K562 (cell line): ENCODE measurements at regions of chr5 and their contacts with region 1.

Region 1: DNA sequence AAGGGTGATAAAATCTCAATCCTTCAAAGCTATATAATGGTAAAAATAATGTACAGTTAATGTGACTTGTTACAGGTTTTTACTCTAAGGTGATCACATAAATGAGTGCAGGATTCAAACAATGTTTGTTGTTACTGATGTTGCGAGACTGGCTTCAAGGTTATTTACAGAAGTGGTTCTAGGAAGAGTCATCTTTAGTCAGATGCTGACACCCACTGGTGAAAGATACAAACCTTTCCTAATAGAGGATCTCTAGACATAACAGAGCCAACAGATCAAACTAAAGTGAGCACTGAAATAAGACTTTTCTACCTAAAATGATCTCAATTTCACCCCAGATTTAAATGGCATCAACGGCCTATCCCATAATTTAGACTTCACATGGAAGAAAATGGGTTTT is 20.2 kb downstream of the ARSB start:
- DNase-seq: peak in 1 of 4 experiments; percentile 47
- ATAC-seq: peak; percentile 74
- H3K4me3 ChIP-seq: no peak overlapping the region
- H3K27ac ChIP-seq: no peak overlapping the region
- H3K4me1 ChIP-seq: no peaks in the 10 kb centered on the region
- H3K27me3 ChIP-seq: no peaks in the 10 kb centered on the region
- CTCF ChIP-seq: peak; percentile 40 to 66 (median 50); a peak in 5 of 6 replicates
- EP300 ChIP-seq: no peak
- POLR2A ChIP-seq: no peak
- RAD21 ChIP-seq: peak; percentile 90 to 91

Region 2: GRCh38 chr5:78320401-78320800 is 644.5 kb before region 1 on chr5:
- CTCF ChIA-PET with region 1: interaction called, 7 read pairs
- POLR2A ChIA-PET with region 1: no interaction called
- in situ Hi-C with region 1: no loop called
- intact Hi-C with region 1: loop called (anchors 10 kb)
- DNase-seq: peak in 2 of 4 experiments; percentile 25 to 42
- ATAC-seq: peak; percentile 67; the same call in 2 of the 3 replicates
- H3K4me3 ChIP-seq: no peak overlapping the region
- H3K27ac ChIP-seq: no peak overlapping the region
- H3K4me1 ChIP-seq: no peaks in the 10 kb centered on the region
- H3K27me3 ChIP-seq: no peaks in the 10 kb centered on the region
- CTCF ChIP-seq: peak; percentile 42 to 79 (median 45); a peak in 4 of 6 replicates
- EP300 ChIP-seq: no peak
- POLR2A ChIP-seq: no peak
- RAD21 ChIP-seq: peak; percentile 70 to 88

Region 3: GRCh38 chr5:78638423-78638822 is 326.5 kb before region 1 on chr5:
- CTCF ChIA-PET with region 1: no interaction called
- POLR2A ChIA-PET with region 1: no interaction called
- in situ Hi-C with region 1: no loop called
- intact Hi-C with region 1: loop called (anchors 10 kb)
- DNase-seq: no peak
- ATAC-seq: no peak
- H3K4me3 ChIP-seq: no peak overlapping the region
- H3K27ac ChIP-seq: no peak overlapping the region
- H3K4me1 ChIP-seq: peaks cover 0 to 6% of the 10 kb centered on the region in 2 experiments; a peak in 3 of 5 replicates
- H3K27me3 ChIP-seq: no peaks in the 10 kb centered on the region
- CTCF ChIP-seq: no peak
- EP300 ChIP-seq: no peak
- POLR2A ChIP-seq: no peak
- RAD21 ChIP-seq: no peak

Region 4: DNA sequence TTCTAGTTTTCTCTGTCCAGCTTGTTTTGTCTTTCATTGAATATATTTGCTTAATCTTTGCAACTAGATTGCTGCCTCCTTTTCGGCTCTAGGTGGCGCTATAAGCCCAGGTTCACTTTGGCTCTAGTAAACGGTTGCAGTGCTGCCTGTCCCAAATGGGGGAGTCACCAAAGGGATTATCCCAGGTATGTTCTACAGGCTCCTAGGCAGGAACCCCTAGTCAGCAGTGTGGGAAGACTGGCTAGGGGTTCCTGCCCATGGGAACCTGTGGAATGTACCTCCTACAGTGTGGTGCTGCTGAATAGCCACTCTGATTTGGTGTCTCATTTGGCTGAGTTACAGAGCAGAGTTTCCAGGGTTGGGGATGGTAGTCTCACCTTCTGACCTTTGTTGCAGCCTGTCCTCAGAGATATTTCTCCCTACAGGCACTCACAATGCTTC is 64.9 kb before region 1 on chr5:
- CTCF ChIA-PET with region 1: interaction called, 18 read pairs
- POLR2A ChIA-PET with region 1: interaction called, 4 read pairs
- in situ Hi-C with region 1: no loop called
- intact Hi-C with region 1: loop called (anchors 2 kb)
- DNase-seq: peak; percentile 55 to 74 (median 62)
- ATAC-seq: peak; percentile 86
- H3K4me3 ChIP-seq: no peak overlapping the region
- H3K27ac ChIP-seq: no peak overlapping the region
- H3K4me1 ChIP-seq: no peaks in the 10 kb centered on the region
- H3K27me3 ChIP-seq: peaks cover 0 to 4% of the 10 kb centered on the region in 2 experiments; a peak in 2 of 5 replicates
- CTCF ChIP-seq: peak; percentile 81 to 90 (median 83)
- EP300 ChIP-seq: no peak
- POLR2A ChIP-seq: no peak
- RAD21 ChIP-seq: peak; percentile 71 to 90